ENCODE measurements at regions of chr3 and their contacts with region 1.

Region 1: DNA sequence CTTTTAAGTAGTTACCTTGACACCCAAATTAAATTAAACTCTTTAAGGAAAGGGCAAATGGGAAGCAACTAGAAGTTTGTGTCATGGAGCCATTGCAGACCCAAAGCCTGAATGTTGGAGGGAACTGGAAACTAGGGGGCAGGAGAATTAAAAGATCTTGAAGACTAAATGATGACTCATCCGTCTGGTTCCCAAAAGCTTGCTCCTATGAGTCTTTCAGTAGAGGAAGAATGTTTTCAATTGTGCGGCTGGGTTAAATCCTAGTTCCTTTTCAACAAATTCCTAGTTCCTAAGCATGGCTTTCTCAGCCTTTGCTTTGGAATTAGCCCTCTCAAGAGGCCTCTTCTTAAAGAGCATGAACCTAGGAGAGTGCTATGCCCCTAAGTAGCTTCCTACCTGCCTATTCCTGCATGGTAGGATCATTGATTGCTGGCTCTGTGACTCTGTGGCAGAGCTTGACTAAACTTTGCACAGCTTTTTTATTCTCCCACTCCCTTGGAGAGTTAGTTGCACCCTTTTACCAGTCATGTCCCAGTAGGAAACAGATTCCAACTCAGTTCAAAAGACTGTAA is 17.7 kb downstream of the CLEC3B start:
- DNase-seq: no peak
- ATAC-seq: peak in 3 of 8 donors; percentile 18 to 51 (median 24)
- H3K4me3 ChIP-seq: no peak overlapping the region
- H3K27ac ChIP-seq: peak overlapping the region in 1 of 10 donors; percentile 79
- H3K4me1 ChIP-seq: peaks cover 0 to 44% (median 0%) of the 10 kb centered on the region in 9 donors
- H3K27me3 ChIP-seq: no peaks in the 10 kb centered on the region
- CTCF ChIP-seq: peak in 3 of 9 donors; percentile 13 to 34 (median 14)

Region 2: DNA sequence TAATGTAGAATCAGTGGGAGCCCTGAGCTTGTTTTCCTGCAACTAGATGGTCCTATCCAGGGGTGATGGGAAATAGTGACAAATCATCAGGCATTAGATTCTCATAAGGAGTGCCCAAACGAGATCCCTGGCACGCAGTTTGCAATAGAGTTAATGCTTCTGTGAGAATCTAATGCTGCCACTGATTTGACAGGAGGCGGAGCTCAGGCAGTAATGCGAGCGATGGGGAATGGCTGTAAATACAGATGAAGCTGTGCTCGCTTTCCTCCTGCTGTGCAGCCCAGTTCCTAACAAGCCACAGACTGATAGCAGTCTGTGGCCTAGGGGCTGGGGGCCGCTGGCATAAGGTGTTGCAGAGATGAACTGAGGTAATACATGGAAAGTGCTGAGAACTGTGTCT is 210.4 kb before region 1 on chr3:
- intact Hi-C with region 1: no loop called
- DNase-seq: no peak
- ATAC-seq: peak in 3 of 8 donors; percentile 39 to 74 (median 67)
- H3K4me3 ChIP-seq: peak overlapping the region in 6 of 10 donors; percentile 9 to 30 (median 23)
- H3K27ac ChIP-seq: peak overlapping the region in 5 of 10 donors; percentile 16 to 42 (median 38)
- H3K4me1 ChIP-seq: peaks cover 0 to 7% (median 0%) of the 10 kb centered on the region in 9 donors
- H3K27me3 ChIP-seq: no peaks in the 10 kb centered on the region
- CTCF ChIP-seq: no peak

Region 3: DNA sequence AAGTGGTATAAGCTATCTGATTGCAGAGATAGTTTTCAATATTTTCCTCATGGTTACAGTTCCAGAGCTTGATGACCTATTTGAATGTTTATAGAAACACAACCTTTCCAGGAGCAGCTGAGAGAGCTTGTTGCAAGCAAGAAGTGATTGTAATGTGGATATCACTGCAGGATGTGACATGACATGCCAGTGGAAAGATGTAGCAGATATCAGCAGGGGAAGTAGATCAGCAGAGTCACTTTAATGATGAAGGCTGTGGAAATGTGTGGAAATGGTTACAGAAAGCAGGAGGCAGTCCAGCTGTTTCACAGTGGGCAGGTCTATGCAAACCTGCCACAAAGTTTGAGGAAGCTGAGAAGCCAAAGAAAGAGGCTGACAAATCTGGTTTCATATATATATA is 161.3 kb after region 1 on chr3:
- intact Hi-C with region 1: loop called (anchors 1 to 5 kb)
- DNase-seq: no peak
- ATAC-seq: no peak
- H3K4me3 ChIP-seq: no peak overlapping the region
- H3K27ac ChIP-seq: no peak overlapping the region
- H3K4me1 ChIP-seq: peaks cover 0 to 3% (median 0%) of the 10 kb centered on the region in 9 donors
- H3K27me3 ChIP-seq: peaks cover 0 to 7% (median 3%) of the 10 kb centered on the region in 7 donors
- CTCF ChIP-seq: no peak

Region 4: DNA sequence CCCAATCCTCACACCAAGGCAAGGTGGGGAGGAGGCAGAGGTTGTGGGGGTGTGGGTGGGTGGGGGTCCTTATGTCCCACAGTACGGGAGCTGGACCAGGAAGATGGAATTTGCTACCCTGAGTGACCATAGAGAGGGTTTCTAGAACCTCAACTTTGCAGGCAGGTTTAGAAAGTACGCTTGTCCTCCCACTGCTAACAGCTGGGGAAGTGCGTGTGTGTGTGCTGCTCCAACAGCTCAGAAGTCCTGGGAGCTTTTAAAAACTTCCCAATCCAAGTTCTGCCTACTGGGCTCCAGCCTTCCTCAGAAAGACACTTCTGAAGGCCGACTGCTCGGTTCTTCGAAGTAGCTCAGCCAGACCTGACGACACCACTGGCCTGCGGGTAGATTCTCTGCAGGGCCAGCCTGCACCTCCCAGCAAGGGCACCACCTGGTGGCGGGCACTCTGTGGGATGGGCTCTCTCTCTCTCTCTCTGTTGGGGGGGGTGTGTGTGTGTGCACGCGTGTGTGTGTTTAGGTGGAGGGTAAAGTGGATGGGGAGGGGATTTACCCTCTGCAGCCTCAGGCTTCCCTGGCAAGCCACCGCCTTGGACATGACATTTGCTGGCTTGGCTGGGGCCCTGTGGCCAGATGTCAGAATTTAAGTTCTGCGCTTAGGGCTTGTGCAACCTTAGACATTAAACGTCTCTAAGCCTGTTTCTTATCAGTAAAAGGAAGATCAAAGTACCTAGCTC is 166.7 kb after region 1 on chr3:
- intact Hi-C with region 1: loop called (anchors 1 to 5 kb)
- DNase-seq: peak; percentile 75 to 83
- ATAC-seq: peak; percentile 94 to 98 (median 96)
- H3K4me3 ChIP-seq: no peak overlapping the region
- H3K27ac ChIP-seq: no peak overlapping the region
- H3K4me1 ChIP-seq: peaks cover 0 to 9% (median 0%) of the 10 kb centered on the region in 9 donors
- H3K27me3 ChIP-seq: peaks cover 0 to 10% (median 5%) of the 10 kb centered on the region in 7 donors
- CTCF ChIP-seq: peak; percentile 37 to 80 (median 72)

Region 5: DNA sequence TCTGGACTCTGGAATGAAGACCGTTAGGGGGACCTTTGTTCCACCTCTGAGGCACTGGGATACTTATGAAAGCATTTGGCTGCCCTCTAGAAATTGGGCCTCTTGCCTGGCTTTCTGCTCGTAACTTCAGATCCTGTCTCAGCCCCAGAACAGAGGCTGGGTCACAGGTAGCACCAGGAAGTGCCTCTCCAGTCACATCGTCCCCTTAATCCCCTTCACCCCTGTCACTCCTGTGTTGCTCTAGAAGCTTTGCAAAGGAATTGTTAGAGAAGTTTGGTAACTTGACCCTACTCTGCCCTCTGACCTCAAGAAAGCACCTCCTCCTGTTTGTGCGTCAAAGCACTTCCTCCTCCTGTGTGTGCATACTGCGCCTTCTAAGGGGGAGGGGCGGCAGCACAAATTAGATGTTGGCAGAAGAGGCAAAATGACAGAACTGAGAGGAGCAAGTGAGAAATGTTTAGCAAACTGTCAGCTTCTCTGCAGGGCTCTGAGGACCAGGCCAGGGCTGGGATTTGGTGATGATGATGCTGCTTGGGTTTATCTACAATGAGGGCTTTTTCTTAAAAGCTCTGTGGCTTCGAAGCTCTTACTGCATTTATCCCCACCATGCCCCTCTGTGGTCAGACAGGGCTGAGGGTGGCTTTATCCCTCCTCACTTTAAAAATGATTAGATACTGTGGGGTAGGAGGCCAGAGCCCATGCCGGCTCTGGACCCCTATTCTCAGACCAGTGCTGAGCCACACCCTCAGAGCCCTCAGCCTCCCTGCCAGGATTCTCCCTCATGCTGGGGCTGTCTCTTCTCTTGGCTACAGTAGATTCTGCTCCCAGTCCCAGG is 420.7 kb after region 1 on chr3:
- intact Hi-C with region 1: no loop called
- DNase-seq: peak in 1 of 2 donors; percentile 30
- ATAC-seq: peak in 3 of 8 donors; percentile 18 to 68 (median 48)
- H3K4me3 ChIP-seq: no peak overlapping the region
- H3K27ac ChIP-seq: peak overlapping the region in 1 of 10 donors; percentile 71
- H3K4me1 ChIP-seq: peaks cover 0 to 13% (median 0%) of the 10 kb centered on the region in 9 donors
- H3K27me3 ChIP-seq: no peaks in the 10 kb centered on the region
- CTCF ChIP-seq: no peak

Region 6: DNA sequence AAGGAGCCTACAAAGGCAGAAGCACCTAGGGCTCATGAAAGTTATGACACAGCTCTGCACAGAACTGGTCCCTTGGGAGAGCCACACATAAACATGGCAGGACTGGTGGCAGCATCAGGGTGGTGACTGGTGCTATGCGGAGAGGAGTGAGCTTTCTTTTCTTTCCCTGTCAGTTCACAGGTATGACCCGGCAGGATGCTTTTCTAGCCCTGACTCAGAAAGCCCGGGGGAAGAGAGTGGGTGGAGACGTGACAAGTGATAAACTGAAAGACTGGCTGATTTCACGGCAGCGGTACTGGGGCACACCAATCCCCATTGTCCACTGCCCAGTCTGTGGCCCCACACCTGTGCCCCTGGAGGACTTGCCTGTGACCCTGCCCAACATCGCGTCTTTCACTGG is 447.5 kb after region 1 on chr3:
- intact Hi-C with region 1: loop called in 6 of 10 experiments (anchors 5 to 10 kb)
- DNase-seq: no peak
- ATAC-seq: no peak
- H3K4me3 ChIP-seq: no peak overlapping the region
- H3K27ac ChIP-seq: no peak overlapping the region
- H3K4me1 ChIP-seq: peaks cover 0 to under 1% (median 0%) of the 10 kb centered on the region in 9 donors
- H3K27me3 ChIP-seq: no peaks in the 10 kb centered on the region
- CTCF ChIP-seq: no peak

Measured in heart right ventricle (tissue), 16 donors.